ENCODE measurements at regions of chr15 and their contacts with region 1.

Region 1: DNA sequence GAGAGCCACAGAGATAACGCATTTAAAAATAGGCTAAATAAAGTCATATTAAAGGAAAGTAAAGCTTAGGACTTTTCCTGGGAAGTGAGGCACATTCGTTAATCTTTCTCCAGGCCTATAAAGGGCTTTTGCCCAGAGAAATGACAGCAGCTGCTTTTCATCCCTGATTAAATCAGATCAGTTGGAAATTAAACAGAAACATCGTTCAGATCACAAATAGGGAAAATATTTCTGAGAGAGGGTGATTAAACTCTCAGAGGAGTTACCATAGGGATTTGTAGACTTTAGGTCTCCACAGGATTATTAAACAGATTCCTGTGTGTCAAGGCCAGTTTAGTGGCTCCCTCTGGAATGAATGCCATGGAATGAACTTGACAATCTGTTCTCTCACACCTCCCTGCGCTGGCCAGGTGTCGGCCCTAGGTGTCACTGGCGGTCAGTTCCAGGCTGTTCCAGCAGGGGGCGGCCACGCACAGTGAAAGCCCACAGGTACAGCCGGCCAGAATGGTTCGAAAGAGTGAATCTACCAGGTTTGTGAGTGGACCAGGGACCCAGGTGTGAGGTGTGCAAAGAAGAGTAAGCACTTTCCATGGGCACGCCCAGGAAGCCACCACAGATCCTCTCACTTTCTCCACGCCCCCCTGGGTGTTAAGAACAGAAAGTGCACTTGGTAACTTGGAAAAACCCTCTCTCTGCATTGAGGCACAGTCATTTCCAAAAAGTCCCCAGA is 253.0 kb upstream of the RASGRP1 start:
- DNase-seq: no peak
- H3K4me3 ChIP-seq: no peak overlapping the region
- CTCF ChIP-seq: peak; percentile 99

Region 2: DNA sequence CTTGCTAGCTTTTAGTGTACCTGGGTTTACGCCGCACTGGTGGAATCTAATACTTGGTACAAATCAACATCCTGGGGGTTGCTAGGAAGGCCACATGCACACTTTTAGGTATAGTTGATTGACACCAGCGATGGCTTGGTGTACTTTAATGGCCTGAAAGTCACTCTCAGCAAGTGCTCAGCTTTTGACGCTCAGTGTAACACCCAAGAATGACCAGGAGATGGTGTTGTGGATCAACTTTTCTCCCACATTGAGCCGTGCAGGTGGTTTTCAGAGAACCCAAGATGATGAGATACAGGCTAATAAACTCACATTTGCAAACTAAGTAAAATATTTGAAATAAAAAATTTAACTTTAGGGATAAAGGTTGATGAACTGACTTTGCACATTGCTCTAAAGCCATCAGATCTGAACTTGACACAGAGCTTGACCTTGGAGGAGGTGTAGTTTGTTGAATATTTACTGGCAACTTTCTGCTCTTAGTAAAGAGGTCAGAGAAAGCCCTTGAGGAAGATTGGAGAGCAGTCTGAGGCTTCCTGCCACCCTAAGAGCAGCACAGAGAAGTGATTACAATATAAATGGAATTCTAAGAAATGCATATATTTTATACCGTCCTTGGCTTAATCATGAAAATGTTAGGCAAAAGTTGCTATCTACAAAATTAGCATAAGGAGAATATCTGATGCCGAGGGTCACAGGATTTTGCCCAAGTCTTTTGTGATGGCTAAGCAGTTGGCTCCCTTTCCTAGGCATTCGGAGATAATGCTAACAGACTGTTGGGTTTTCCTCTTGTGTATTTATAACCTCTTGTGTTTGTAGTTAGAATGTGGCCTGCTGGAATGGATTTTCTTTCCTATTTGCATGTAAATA is 109.6 kb before region 1 on chr15:
- CTCF ChIA-PET with region 1: interaction called, 24 read pairs
- POLR2A ChIA-PET with region 1: no interaction called
- DNase-seq: no peak
- H3K4me3 ChIP-seq: no peak overlapping the region
- CTCF ChIP-seq: peak; percentile 70

Region 3: GRCh38 chr15:38714309-38715072 is 103.1 kb before region 1 on chr15:
- CTCF ChIA-PET with region 1: interaction called, 10 read pairs
- POLR2A ChIA-PET with region 1: no interaction called
- DNase-seq: peak; percentile 99
- H3K4me3 ChIP-seq: no peak overlapping the region
- CTCF ChIP-seq: no peak

Region 4: GRCh38 chr15:38768970-38769369 is 48.6 kb before region 1 on chr15:
- CTCF ChIA-PET with region 1: interaction called, 11 read pairs
- POLR2A ChIA-PET with region 1: no interaction called
- DNase-seq: no peak
- H3K4me3 ChIP-seq: no peak overlapping the region
- CTCF ChIP-seq: peak; percentile 16

Region 5: DNA sequence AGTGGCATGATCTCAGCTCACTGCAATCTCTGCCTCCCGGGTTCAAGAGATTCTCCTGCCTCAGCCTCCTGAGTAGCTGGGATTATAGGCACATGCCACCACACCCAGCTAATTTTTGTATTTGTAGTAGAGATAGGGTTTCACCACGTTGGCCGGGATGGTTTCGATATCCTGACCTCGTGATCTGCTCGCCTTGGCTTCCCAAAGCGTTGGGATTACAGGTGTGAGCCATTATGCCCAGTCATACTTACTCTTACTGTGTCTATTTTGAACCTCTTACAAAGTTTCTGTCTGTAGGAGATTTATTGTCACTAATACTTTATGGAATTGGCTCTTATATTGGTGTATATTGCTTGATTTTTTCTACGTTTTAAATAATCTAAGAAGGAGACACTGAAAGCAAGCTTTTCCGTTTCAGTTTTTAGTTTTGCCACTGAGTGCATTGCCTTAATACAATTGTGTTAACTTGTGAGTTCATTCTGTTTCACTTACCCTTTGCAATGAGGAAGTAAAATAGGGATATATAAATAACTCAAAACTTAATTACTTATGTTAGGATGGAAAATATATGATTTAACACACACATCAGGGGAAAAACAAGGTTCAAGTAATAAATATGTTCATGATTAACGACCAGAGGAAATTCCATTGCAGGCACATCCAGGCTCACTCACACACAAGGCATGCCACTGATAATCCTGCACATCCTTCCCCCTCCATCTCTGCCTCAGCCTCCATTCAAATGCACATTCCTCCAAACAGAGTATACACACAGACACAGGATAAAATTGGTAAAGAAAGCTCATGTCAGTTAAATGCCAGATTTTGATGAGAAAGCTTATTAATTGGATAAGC is 26.4 kb after region 1 on chr15:
- CTCF ChIA-PET with region 1: interaction called, 16 read pairs
- POLR2A ChIA-PET with region 1: interaction called, 3 read pairs
- DNase-seq: peak; percentile 90
- H3K4me3 ChIP-seq: no peak overlapping the region
- CTCF ChIP-seq: no peak

Region 6: GRCh38 chr15:38991126-38991525 is 173.5 kb after region 1 on chr15:
- CTCF ChIA-PET with region 1: interaction called, 19 read pairs
- POLR2A ChIA-PET with region 1: no interaction called
- DNase-seq: no peak
- H3K4me3 ChIP-seq: no peak overlapping the region
- CTCF ChIP-seq: peak; percentile 24

Measured in AG04449 (cell line).